Posterior vena cava (tissue), 2 donors: ENCODE measurements at regions of chr9 and their contacts with region 1.

Region 1: DNA sequence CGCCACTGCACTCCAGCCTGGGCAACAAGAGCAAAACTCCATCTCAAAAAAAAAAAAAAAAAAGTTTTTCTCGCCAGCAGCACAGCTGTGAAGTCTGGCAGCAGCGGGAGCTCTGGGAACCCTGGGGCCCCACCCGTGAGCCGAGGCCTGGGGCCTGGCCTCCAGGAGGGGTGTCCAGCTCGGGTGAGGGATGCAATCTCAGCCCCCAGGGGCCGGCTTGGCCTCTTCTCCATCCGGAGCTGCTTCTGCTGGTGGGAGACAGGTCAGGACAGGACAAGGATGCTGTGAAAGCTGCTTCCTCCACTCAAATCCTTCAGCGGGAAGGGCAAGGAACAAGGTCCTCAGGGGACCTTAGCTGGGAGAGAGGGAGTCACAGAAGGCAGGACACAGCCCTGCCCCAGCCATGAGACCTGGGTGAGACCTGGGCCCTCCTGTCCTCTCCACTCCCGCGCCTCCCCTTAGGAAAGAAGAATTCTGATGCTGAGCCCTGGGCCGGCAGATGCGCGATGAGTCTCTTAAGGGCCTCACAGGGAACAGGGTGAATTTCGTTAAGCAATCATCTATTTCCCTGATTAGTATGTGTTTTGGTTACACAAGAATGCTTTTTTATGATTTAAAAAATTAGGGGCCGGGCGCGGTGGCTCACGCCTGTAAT is 30.6 kb downstream of the PLPP7 start:
- DNase-seq: peak; percentile 71

Region 2: DNA sequence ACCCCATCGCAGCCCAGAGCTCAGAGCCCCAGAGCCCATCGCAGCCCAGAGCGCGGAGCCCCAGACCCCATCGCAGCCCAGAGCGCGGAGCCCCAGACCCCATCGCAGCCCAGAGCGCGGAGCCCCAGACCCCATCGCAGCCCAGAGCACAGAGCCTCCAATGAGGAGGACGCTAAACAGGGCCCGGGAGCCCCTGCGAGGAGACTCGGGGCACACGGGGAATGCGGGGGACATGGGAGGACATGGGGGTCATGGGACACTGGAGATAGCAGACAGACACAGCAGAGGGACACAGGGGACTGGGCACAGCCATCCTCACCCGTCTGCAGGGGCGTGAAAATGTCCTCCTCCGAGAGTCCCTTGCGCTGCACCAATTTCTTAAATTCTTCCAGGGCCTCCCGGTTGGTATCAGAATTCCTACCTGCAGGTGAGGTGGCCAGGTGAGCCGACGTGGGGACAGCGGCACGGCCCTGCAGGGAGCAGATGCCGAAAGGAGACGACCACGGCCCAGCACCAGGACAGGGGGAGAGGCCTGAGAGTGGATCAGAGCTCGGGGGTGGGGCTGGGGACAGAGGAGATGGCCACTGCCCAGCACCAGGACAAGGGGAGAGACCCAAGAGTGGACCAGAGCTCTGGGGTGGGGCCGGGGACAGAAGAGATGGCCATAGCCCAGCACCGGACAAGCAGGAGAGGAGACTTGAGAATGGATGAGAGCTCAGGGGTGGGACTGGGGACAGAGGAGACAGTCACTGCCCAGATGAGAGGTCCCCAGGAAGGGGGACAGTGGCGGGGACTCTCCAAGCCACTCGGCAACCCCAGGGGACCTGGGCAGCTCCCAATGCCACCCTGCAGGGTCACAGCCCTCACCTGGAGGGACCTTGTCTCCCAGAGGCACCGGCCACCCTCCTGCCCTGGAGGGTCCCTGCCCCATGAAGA is 1886.1 kb after region 1 on chr9:
- intact Hi-C with region 1: loop called in 1 of 2 experiments (anchors 5 kb)
- DNase-seq: peak; percentile 68